Heart left ventricle (tissue), 16 donors: ENCODE measurements at regions of chr12 and their contacts with region 1.

Region 1: DNA sequence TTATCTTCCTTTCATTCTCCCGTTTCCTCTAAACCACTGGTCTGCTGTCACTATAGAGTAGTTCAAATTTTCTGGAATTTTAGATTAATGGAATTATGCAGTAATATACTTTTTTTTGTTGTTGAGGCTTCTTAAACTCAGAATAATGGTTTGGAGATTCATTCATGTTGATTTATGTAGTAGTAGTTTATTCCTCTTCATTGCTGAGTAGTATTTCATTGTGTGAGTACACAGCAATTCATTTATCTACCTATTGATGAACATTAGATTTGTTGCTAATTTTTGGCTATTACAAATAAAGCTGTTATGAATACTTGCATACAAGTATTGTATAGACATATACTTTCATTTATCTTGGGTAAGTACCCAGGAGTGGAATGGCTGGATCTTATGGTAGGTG is 7.2 kb downstream of the RASSF8 start:
- DNase-seq: no peak
- ATAC-seq: no peak
- H3K4me3 ChIP-seq: no peak overlapping the region
- H3K27ac ChIP-seq: no peak overlapping the region
- H3K4me1 ChIP-seq: peaks cover 0 to 52% (median 15%) of the 10 kb centered on the region in 12 donors
- H3K27me3 ChIP-seq: no peaks in the 10 kb centered on the region
- CTCF ChIP-seq: no peak
- POLR2A ChIP-seq: no peak

Region 2: DNA sequence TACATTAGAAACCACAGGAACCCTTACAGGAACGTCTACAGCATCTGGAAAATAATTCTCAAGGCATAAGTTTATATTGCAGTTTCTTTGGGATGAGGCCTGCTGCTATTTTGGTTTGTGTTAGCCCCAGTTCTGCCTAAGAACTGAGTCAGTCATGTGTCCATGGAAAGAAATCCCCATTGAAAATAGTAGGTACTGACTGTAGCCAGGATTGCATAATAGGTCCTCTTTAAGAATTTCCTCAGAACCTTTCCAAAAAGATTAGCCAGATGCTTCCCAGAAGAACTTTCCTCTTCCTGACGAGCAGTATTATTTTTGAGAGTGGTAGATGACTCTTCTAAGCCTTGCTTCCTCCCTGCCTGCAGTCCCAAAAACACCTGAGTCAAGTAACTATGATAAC is 45.4 kb after region 1 on chr12:
- intact Hi-C with region 1: loop called in 7 of 10 experiments (anchors 2 to 5 kb)
- DNase-seq: no peak
- ATAC-seq: peak; percentile 78 to 94 (median 92)
- H3K4me3 ChIP-seq: no peak overlapping the region
- H3K27ac ChIP-seq: peak overlapping the region; percentile 38 to 84 (median 60)
- H3K4me1 ChIP-seq: peaks cover 15 to 54% (median 33%) of the 10 kb centered on the region in 12 donors
- H3K27me3 ChIP-seq: no peaks in the 10 kb centered on the region
- CTCF ChIP-seq: no peak
- POLR2A ChIP-seq: no peak